ENCODE measurements at regions of chr16 and their contacts with region 1.

Region 1: GRCh38 chr16:59783191-59783590 is 1049.1 kb upstream of the GOT2 start:
- DNase-seq: no peak
- H3K4me3 ChIP-seq: no peak overlapping the region
- H3K27ac ChIP-seq: no peak overlapping the region
- H3K4me1 ChIP-seq: no peaks in the 10 kb centered on the region
- H3K27me3 ChIP-seq: no peaks in the 10 kb centered on the region
- CTCF ChIP-seq: no peak
- POLR2A ChIP-seq: no peak

Region 2: DNA sequence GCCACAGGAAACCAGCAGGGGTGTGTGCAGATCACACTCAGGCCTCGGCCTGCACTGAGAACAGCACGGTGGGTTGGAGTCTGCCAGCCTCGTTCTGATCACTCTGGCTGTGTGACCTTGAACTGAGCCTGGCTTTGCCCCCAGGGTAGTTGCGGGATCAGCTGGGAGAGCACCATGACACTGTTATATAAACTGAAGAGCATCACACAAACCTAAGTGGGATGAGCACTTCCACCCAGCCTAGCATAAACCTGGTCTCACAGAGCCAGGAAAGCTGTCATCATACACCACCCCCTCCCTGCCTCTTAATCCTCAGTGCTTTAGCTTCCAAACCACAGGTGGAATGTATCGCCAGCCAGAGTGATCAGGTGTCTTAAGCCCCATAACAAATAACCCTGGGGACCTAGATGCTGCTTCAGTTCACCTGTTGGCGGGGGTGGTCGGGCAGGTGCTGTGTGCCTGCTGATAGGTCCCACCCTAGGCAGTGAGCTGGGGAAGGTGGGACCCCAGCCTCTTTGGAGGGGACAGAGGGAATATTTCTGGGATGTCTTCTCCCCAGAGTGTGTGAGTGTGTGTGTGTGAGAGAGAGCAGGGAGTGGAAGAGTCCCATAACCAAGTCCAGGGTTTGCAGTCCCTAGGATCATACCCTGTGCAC is 1311.7 kb before region 1 on chr16:
- intact Hi-C with region 1: loop called (anchors 5 kb)
- DNase-seq: no peak
- H3K4me3 ChIP-seq: no peak overlapping the region
- H3K27ac ChIP-seq: no peak overlapping the region
- H3K4me1 ChIP-seq: peaks cover 6% of the 10 kb centered on the region
- H3K27me3 ChIP-seq: no peaks in the 10 kb centered on the region
- CTCF ChIP-seq: no peak
- POLR2A ChIP-seq: no peak